ENCODE measurements at regions of chr9 and their contacts with region 1.

Region 1: GRCh38 chr9:137067860-137068538 is 2.4 kb downstream of the SAPCD2 start:
- DNase-seq: peak; percentile 75 to 90 (median 89)
- ATAC-seq: peak; percentile 15 to 42
- H3K4me3 ChIP-seq: no peak overlapping the region
- H3K27ac ChIP-seq: no peak overlapping the region
- H3K4me1 ChIP-seq: no peaks in the 10 kb centered on the region
- H3K27me3 ChIP-seq: no peaks in the 10 kb centered on the region

Region 2: GRCh38 chr9:136790927-136791641 is 276.9 kb before region 1 on chr9 and contains the start of gene TMEM141:
- intact Hi-C with region 1: loop called in 1 of 4 experiments (anchors 10 kb)
- DNase-seq: peak; percentile 100
- ATAC-seq: peak; percentile 96 to 97
- H3K4me3 ChIP-seq: peak within 1 kb of the TSS; percentile 55
- H3K27ac ChIP-seq: peak within 1 kb of the TSS; percentile 85
- H3K4me1 ChIP-seq: peaks cover 3% of the 10 kb centered on the region
- H3K27me3 ChIP-seq: no peaks in the 10 kb centered on the region
- total RNA-seq, gene TMEM141: 73.6 to 115 (median 100) TPM

Region 3: DNA sequence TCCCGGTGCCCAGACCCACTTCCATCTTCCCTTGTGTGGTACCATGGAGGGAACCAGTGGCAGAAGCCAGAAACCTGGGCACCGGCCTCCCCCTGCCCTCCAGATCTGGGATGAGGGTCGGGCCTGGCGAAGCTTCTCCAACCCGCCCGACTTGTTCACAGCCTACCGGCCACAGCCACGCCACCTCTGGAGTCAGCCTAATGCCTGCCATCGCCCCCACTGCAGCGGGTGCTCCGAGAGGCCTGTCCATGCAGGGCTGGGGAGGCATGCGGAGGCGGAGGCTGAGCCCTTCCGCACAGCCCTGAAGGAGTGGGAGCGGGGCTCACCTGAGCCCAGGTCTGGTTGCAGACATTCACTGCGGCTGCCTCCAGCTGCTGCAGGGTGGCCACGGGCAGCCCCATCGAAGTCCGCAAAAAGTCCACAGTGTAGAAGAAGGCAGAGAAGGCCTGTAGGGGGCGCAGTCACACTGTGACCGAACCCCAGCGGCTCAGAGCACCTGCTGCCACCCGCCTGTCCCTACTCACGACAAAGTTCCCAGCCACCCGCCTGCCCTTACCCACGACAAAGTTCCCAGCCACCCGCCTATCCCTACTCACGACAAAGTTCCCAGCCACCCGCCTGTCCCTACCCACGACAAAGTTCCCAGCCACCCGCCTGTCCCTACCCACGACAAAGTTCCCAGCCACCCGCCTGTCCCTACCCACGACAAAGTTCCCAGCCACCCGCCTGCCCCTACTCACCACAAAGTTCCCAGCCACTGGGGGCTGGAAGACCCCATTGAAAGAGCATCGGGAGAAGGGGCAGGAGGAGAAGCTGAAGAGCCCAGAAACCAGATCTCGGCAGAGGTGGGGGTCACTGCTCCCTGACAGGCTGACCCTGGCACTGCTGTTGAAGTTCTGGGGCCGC is 18.2 kb before region 1 on chr9:
- intact Hi-C with region 1: loop called in 1 of 4 experiments (anchors 2 kb)
- DNase-seq: peak in 2 of 3 donors; percentile 81 to 83
- ATAC-seq: peak; percentile 4 to 6
- H3K4me3 ChIP-seq: no peak overlapping the region
- H3K27ac ChIP-seq: no peak overlapping the region
- H3K4me1 ChIP-seq: peaks cover 2% of the 10 kb centered on the region
- H3K27me3 ChIP-seq: no peaks in the 10 kb centered on the region

Region 4: GRCh38 chr9:137156567-137157375 is 88.8 kb after region 1 on chr9:
- intact Hi-C with region 1: no loop called
- DNase-seq: peak in 2 of 3 donors; percentile 41 to 67
- ATAC-seq: peak; percentile 52 to 79
- H3K4me3 ChIP-seq: no peak overlapping the region
- H3K27ac ChIP-seq: no peak overlapping the region
- H3K4me1 ChIP-seq: no peaks in the 10 kb centered on the region
- H3K27me3 ChIP-seq: no peaks in the 10 kb centered on the region

Measured in right cardiac atrium (tissue), 5 donors.